GM12878 (cell line): ENCODE measurements at regions of chr22 and their contacts with region 1.

Region 1: GRCh38 chr22:40400159-40400558 is 29.8 kb downstream of the SGSM3 start:
- DNase-seq: peak; percentile 63
- ATAC-seq: peak; percentile 70
- H3K4me3 ChIP-seq: no peak overlapping the region
- H3K27ac ChIP-seq: peak overlapping the region; percentile 68; the same call in 1 of the 2 replicates
- H3K4me1 ChIP-seq: peaks cover 38% of the 10 kb centered on the region
- H3K27me3 ChIP-seq: no peaks in the 10 kb centered on the region
- CTCF ChIP-seq: no peak
- EP300 ChIP-seq: no peak
- POLR2A ChIP-seq: no peak
- RAD21 ChIP-seq: no peak

Region 2: GRCh38 chr22:40385036-40385782 is 14.9 kb before region 1 on chr22:
- CTCF ChIA-PET with region 1: interaction called, 6 read pairs
- POLR2A ChIA-PET with region 1: interaction called, 9 read pairs
- RAD21 ChIA-PET with region 1: interaction called, 5 read pairs
- SMC1A ChIA-PET with region 1: interaction called, 25 read pairs
- in situ Hi-C with region 1: no loop called
- intact Hi-C with region 1: no loop called
- DNase-seq: no peak
- ATAC-seq: peak; percentile 92
- H3K4me3 ChIP-seq: peak overlapping the region; percentile 54
- H3K27ac ChIP-seq: peak overlapping the region; percentile 91
- H3K4me1 ChIP-seq: peaks cover 26% of the 10 kb centered on the region
- H3K27me3 ChIP-seq: no peaks in the 10 kb centered on the region
- CTCF ChIP-seq: 0 out of 6 replicates have a peak, but pooled peaks of 1 of the 3 experiments have one; percentile 4
- EP300 ChIP-seq: no peak; a peak in 1 of 4 replicates
- POLR2A ChIP-seq: no peak
- RAD21 ChIP-seq: no peak